Caco-2 (cell line): ENCODE measurements at regions of chr1 and their contacts with region 1.

Region 1: DNA sequence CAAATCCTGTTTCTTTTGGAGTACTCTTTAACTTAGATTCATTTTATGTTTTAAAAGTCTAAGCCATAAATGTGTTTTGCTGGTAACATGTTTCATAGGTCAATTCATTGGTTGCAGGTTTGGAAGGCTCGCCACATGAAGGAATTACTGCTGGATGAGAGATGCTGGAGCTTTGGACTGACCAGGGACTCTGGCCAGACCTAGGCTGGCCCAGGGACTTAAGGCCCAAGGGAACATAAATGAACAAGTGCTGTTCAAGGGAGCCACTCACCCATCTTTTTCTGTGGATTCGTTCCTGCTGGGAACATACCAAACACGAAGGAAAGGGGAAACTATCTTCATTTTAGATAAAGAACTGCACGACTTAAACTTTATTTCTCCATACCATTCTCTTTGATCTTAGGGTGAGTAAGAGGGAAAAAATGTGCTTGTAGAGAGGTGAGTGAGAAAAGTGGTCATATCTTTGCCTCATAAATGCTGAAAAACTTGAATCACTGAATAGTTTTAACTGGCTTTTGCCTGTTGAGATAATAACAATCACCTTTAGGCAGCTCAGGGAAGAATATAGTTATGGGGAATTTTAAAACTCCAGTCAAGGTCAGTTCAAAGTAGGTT is 15.3 kb upstream of the SHCBP1L start:
- DNase-seq: peak; percentile 41 to 53
- H3K4me3 ChIP-seq: no peak overlapping the region
- H3K4me3 Mint-ChIP-seq: peak overlapping the region; percentile 52
- H3K27ac Mint-ChIP-seq: peak overlapping the region; percentile 92
- H3K4me1 ChIP-seq: peaks cover 84% of the 10 kb centered on the region
- H3K4me1 Mint-ChIP-seq: peaks cover 21% of the 10 kb centered on the region
- H3K27me3 ChIP-seq: no peaks in the 10 kb centered on the region
- H3K27me3 Mint-ChIP-seq: no peaks in the 10 kb centered on the region
- CTCF ChIP-seq: no peak

Region 2: DNA sequence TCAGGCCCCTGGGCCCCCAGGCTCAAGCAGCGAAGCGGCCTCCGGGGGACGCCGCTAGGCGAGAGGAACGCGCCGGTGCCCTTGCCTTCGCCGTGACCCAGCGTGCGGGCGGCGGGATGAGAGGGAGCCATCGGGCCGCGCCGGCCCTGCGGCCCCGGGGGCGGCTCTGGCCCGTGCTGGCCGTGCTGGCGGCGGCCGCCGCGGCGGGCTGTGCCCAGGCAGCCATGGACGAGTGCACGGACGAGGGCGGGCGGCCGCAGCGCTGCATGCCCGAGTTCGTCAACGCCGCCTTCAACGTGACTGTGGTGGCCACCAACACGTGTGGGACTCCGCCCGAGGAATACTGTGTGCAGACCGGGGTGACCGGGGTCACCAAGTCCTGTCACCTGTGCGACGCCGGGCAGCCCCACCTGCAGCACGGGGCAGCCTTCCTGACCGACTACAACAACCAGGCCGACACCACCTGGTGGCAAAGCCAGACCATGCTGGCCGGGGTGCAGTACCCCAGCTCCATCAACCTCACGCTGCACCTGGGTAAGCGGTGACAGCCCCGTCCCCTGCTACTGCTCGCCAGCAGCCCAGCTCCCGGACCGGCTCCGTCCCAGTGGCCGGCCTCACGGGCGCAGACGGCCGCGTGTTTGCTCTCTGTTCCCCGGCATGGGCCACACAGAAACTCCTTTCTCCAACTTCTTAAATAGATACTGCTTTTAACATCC is 55.5 kb after region 1 on chr1:
- CTCF ChIA-PET with region 1: interaction called, 16 read pairs
- POLR2A ChIA-PET with region 1: interaction called, 3 read pairs
- intact Hi-C with region 1: loop called (anchors 1 kb)
- DNase-seq: peak; percentile 93
- H3K4me3 ChIP-seq: peak overlapping the region; percentile 92
- H3K4me3 Mint-ChIP-seq: peak overlapping the region; percentile 97
- H3K27ac Mint-ChIP-seq: peak overlapping the region; percentile 90
- H3K4me1 ChIP-seq: peaks cover 50% of the 10 kb centered on the region
- H3K4me1 Mint-ChIP-seq: peaks cover 33% of the 10 kb centered on the region
- H3K27me3 ChIP-seq: no peaks in the 10 kb centered on the region
- H3K27me3 Mint-ChIP-seq: no peaks in the 10 kb centered on the region
- CTCF ChIP-seq: peak; percentile 50 to 85

Region 3: GRCh38 chr1:183139281-183139942 is 171.2 kb after region 1 on chr1:
- CTCF ChIA-PET with region 1: no interaction called
- POLR2A ChIA-PET with region 1: no interaction called
- intact Hi-C with region 1: loop called (anchors 5 kb)
- DNase-seq: peak in 1 of 2 experiments; percentile 30
- H3K4me3 ChIP-seq: no peak overlapping the region
- H3K4me3 Mint-ChIP-seq: peak overlapping the region; percentile 47
- H3K27ac Mint-ChIP-seq: peak overlapping the region; percentile 82
- H3K4me1 ChIP-seq: peaks cover 28% of the 10 kb centered on the region; the same call in 1 of the 2 replicates
- H3K4me1 Mint-ChIP-seq: peaks cover 11% of the 10 kb centered on the region
- H3K27me3 ChIP-seq: no peaks in the 10 kb centered on the region
- H3K27me3 Mint-ChIP-seq: no peaks in the 10 kb centered on the region
- CTCF ChIP-seq: no peak

Region 4: DNA sequence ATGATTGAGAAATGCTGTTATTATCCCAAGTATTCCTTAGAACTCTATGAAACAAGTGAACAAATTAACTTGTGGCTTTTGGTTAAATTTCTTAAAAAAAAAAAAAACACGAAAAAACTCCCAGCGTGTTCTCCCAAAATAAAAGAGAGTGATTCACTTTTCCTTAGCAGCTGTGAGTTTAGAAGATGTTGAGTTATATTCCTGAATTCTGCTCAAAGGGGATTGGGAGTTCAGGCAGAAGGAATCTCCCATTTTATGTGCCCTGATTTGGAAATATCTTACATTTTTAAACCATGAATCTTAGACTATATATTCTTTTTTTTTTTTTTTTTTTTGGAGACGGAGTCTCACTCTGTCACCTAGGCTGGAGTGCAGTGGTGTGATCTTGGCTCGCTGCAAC is 538.3 kb after region 1 on chr1:
- CTCF ChIA-PET with region 1: no interaction called
- POLR2A ChIA-PET with region 1: no interaction called
- intact Hi-C with region 1: no loop called
- DNase-seq: no peak
- H3K4me3 ChIP-seq: no peak overlapping the region
- H3K4me3 Mint-ChIP-seq: no peak overlapping the region
- H3K27ac Mint-ChIP-seq: no peak overlapping the region
- H3K4me1 ChIP-seq: 0 out of 2 replicates have a peak, but pooled peaks cover 3% of the 10 kb centered on the region
- H3K4me1 Mint-ChIP-seq: peaks cover 6% of the 10 kb centered on the region
- H3K27me3 ChIP-seq: no peaks in the 10 kb centered on the region
- H3K27me3 Mint-ChIP-seq: no peaks in the 10 kb centered on the region
- CTCF ChIP-seq: no peak